Activated T-helper 1 cell treated with anti-CD3 and anti-CD28 coated beads, Interleukin-12 subunit alpha, Interleukin-12 subunit beta, Interleukin-2, Interleukin-4 antibody, amounts not matched to agents 30 ng/mL and 10 ng/mL and 1 ng/mL, durations not matched to agents 14 hours and 24 hours and 36 hours (primary cell): ENCODE measurements at regions of chr14 and their contacts with region 1.

Region 1: GRCh38 chr14:71410578-71411284 is 503.5 kb downstream of the PCNX1 start:
- DNase-seq: no peak
- H3K4me3 Mint-ChIP-seq: no peak overlapping the region
- H3K27ac Mint-ChIP-seq: peak overlapping the region; percentile 84
- H3K4me1 Mint-ChIP-seq: peaks cover 62% of the 10 kb centered on the region
- H3K27me3 Mint-ChIP-seq: no peaks in the 10 kb centered on the region

Region 2: DNA sequence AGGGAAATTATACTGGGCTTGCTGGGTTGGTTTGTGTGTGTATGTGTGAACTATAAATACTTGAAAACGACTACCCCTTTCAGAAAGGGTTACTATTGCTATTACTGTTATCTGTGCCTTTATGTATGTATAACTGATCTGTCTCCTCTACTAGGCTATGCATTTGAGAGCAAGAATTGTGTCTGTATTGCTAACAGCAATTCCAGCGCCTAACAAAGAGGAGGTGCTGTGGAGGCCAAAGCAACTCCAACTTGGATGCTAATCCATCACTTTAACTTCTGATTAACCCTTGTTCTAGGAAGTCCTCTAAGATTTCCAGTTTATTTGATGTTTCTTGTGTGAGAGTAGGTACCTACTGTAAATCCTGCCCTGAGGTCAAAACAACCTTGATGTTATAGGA is 189.6 kb before region 1 on chr14:
- intact Hi-C with region 1: no loop called
- DNase-seq: no peak
- H3K4me3 Mint-ChIP-seq: no peak overlapping the region
- H3K27ac Mint-ChIP-seq: no peak overlapping the region
- H3K4me1 Mint-ChIP-seq: peaks cover 34% of the 10 kb centered on the region
- H3K27me3 Mint-ChIP-seq: peaks cover 3% of the 10 kb centered on the region

Region 3: GRCh38 chr14:71424941-71425340 is 14.2 kb after region 1 on chr14:
- intact Hi-C with region 1: loop called (anchors 2 kb)
- DNase-seq: no peak
- H3K4me3 Mint-ChIP-seq: no peak overlapping the region
- H3K27ac Mint-ChIP-seq: peak overlapping the region; percentile 55
- H3K4me1 Mint-ChIP-seq: peaks cover 29% of the 10 kb centered on the region
- H3K27me3 Mint-ChIP-seq: no peaks in the 10 kb centered on the region

Region 4: GRCh38 chr14:71472043-71472960 is 61.6 kb after region 1 on chr14:
- intact Hi-C with region 1: loop called (anchors 1 kb)
- DNase-seq: no peak
- H3K4me3 Mint-ChIP-seq: peak overlapping the region; percentile 6
- H3K27ac Mint-ChIP-seq: peak overlapping the region; percentile 27
- H3K4me1 Mint-ChIP-seq: peaks cover 67% of the 10 kb centered on the region
- H3K27me3 Mint-ChIP-seq: no peaks in the 10 kb centered on the region

Region 5: DNA sequence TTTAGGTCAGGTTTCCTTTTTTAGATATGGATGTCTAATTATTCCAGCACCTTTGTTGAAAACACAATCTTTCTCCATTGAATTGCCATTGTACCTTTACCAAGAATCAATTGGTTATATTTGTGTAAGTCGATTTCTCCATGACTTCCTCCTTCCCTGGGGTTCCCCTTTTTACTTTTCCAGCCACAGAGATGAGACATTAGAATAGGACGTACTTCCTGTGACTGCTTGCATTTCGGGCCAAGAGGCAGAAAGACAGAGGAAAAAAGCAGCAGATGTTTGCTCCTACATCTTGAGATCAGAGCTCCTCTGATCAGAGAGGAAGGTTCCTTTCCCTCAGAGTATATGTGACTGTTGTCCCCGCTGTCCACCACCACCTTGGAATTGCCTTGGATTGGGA is 67.8 kb after region 1 on chr14:
- intact Hi-C with region 1: loop called (anchors 1 kb)
- DNase-seq: no peak
- H3K4me3 Mint-ChIP-seq: peak overlapping the region; percentile 63
- H3K27ac Mint-ChIP-seq: peak overlapping the region; percentile 87
- H3K4me1 Mint-ChIP-seq: peaks cover 55% of the 10 kb centered on the region
- H3K27me3 Mint-ChIP-seq: no peaks in the 10 kb centered on the region

Region 6: GRCh38 chr14:71918952-71919351 is 508.2 kb after region 1 on chr14:
- intact Hi-C with region 1: no loop called
- DNase-seq: no peak
- H3K4me3 Mint-ChIP-seq: no peak overlapping the region
- H3K27ac Mint-ChIP-seq: no peak overlapping the region
- H3K4me1 Mint-ChIP-seq: no peaks in the 10 kb centered on the region
- H3K27me3 Mint-ChIP-seq: peaks cover 13% of the 10 kb centered on the region